ENCODE measurements at regions of chr1 and their contacts with region 1.

Region 1: GRCh38 chr1:146007506-146008133 is 11.2 kb upstream of the TXNIP start:
- DNase-seq: no peak
- H3K4me3 ChIP-seq: no peak overlapping the region
- H3K27ac ChIP-seq: no peak overlapping the region
- H3K4me1 ChIP-seq: peaks cover 4% of the 10 kb centered on the region
- H3K27me3 ChIP-seq: no peaks in the 10 kb centered on the region
- CTCF ChIP-seq: no peak
- POLR2A ChIP-seq: no peak

Region 2: DNA sequence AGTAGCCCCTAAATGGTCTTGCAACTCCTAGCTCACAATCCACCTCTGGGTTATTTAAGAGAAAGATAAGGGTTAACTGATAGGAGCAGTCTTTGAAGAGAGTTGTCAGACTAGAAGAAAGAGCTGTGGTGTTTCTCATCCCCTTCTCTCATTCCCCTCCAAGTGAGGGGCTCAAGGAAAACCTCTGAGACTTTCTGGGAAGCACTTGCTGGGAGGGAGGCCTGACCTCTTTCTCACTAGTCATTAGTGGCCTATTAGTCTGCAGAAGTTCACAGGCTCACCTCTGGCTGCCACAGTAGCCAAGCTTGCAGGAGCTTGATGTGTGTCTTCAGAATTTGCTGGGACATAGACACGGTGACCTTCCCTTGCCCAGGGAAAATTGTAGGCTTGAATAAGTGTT is 406.0 kb before region 1 on chr1:
- CTCF ChIA-PET with region 1: no interaction called
- POLR2A ChIA-PET with region 1: no interaction called
- dilution Hi-C with region 1: no loop called
- intact Hi-C with region 1: no loop called
- DNase-seq: no peak
- H3K4me3 ChIP-seq: no peak overlapping the region
- H3K27ac ChIP-seq: no peak overlapping the region
- H3K4me1 ChIP-seq: no peaks in the 10 kb centered on the region
- H3K27me3 ChIP-seq: no peaks in the 10 kb centered on the region
- CTCF ChIP-seq: no peak
- POLR2A ChIP-seq: no peak

Region 3: GRCh38 chr1:145963995-145964901 is 43.4 kb before region 1 on chr1 and contains the starts of genes ANKRD34A and POLR3GL:
- CTCF ChIA-PET with region 1: interaction called, 13 read pairs
- POLR2A ChIA-PET with region 1: interaction called, 6 read pairs
- dilution Hi-C with region 1: no loop called
- intact Hi-C with region 1: no loop called
- DNase-seq: peak; percentile 96
- H3K4me3 ChIP-seq: peak within 1 kb of the TSS; percentile 38 to 77 (median 60)
- H3K27ac ChIP-seq: peak within 1 kb of the TSS; percentile 43
- H3K4me1 ChIP-seq: peaks cover 34% of the 10 kb centered on the region
- H3K27me3 ChIP-seq: no peaks in the 10 kb centered on the region
- CTCF ChIP-seq: no peak
- POLR2A ChIP-seq: peak; percentile 82
- total RNA-seq, gene ANKRD34A: 0.24 and 0.60 TPM in 2 replicates
- total RNA-seq, gene POLR3GL: 15.3 and 18.8 TPM in 2 replicates

Region 4: DNA sequence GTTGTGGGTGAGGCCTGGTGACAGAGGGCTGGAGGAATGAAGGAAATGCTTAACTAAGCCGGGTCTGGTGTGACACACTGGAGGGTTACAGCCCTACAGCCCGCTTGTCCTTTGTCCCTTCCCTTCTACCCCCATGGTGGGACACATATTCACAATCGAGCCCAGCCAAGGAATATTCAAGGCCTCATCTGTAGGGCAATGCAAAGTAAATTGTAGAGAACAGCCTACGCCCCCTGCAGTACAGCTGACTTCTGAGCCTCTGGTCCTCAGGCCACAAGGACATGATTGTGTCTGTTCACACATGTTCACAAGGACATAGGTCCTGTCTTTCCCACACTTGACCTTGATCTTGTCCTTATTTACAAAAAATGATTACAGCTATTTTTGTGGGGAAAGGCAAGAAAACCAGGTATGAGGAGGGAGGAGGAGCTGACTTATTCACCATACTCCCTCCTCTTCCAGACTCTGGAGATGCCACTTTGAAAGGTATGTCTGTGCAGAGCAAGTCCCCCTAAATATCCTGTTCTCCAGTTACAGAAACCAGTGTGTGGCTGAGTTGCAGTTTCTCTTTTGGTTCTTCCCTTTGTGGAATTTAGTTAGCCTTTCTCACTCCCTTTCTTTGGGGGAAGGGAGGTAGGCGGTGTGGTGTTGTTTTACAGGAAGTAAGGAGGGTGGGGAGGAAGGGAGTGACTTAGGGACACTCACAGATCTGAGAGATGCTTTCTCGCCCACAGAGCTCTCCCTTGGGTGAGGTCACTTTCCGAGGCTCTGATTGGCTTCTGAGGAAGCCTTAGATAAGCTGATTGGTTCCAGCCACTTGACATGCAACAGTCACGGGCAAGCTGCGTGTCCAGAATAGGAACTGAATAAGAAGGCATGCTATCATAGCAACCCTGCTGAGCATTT is 28.5 kb before region 1 on chr1:
- CTCF ChIA-PET with region 1: interaction called, 496 read pairs
- POLR2A ChIA-PET with region 1: interaction called, 4 read pairs
- dilution Hi-C with region 1: no loop called
- intact Hi-C with region 1: loop called (anchors 1 kb)
- DNase-seq: peak; percentile 98
- H3K4me3 ChIP-seq: peak overlapping the region in 1 of 3 experiments; percentile 37
- H3K27ac ChIP-seq: peak overlapping the region; percentile 89
- H3K4me1 ChIP-seq: peaks cover 40% of the 10 kb centered on the region
- H3K27me3 ChIP-seq: no peaks in the 10 kb centered on the region
- CTCF ChIP-seq: no peak
- POLR2A ChIP-seq: peak; percentile 52

Region 5: GRCh38 chr1:146019231-146020057 is 11.8 kb after region 1 on chr1:
- CTCF ChIA-PET with region 1: interaction called, 18 read pairs
- POLR2A ChIA-PET with region 1: no interaction called
- dilution Hi-C with region 1: no loop called
- intact Hi-C with region 1: no loop called
- DNase-seq: no peak
- H3K4me3 ChIP-seq: no peak overlapping the region
- H3K27ac ChIP-seq: no peak overlapping the region
- H3K4me1 ChIP-seq: no peaks in the 10 kb centered on the region
- H3K27me3 ChIP-seq: peaks cover 44 to 55% of the 10 kb centered on the region in 2 experiments
- CTCF ChIP-seq: no peak
- POLR2A ChIP-seq: no peak

Measured in endothelial cell of umbilical vein (primary cell).